Activated naive CD4-positive, alpha-beta T cell treated with anti-CD3 and anti-CD28 coated beads, Interleukin-2, amount 10 ng/mL, durations not matched to agents 7 days and 5 days (primary cell): ENCODE measurements at regions of chr9 and their contacts with region 1.

Region 1: GRCh38 chr9:109903515-109904138 is 123.6 kb downstream of the PALM2AKAP2 start:
- DNase-seq: peak; percentile 81
- H3K4me3 Mint-ChIP-seq: no peak overlapping the region
- H3K27ac Mint-ChIP-seq: no peak overlapping the region
- H3K4me1 Mint-ChIP-seq: peaks cover 19% of the 10 kb centered on the region
- H3K27me3 Mint-ChIP-seq: no peaks in the 10 kb centered on the region

Region 2: DNA sequence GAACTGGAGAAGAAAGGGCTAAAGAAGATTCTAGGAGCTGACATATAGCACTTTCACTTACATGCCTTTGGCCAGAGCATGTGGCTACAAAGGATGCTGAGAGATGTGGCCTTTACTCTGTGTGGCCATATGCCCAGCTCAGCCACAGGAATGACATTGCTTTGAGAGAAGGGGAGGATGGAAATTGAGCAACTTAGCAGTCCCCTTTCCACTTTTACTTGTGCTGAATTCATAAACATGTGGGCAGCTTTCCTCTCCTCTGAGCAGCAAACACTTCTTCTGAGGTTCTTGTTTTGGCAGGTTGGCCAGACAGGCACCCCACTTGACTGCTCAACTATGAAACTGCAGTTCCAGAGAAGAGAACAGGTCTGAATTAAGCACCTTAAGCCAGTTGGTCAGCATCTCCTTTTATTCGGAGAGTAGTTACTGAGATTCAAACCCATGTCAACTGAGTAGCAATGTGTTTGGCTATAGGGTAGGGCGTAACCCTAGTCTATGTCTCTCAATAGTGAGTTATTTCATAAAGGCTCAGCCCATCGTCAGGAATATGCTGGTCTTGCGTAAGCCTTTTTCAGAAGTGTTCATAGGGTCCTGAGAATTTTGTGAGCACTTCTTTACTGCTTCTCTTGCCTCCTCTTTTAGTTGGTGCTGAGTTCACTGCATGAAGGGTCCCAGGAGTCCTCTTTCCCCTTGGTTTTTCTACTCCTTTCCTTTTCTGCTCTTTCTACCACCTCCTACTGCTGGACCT is 10.8 kb after region 1 on chr9:
- CTCF ChIA-PET with region 1: interaction called, 18 read pairs
- DNase-seq: no peak
- H3K4me3 Mint-ChIP-seq: no peak overlapping the region
- H3K27ac Mint-ChIP-seq: no peak overlapping the region
- H3K4me1 Mint-ChIP-seq: peaks cover 29% of the 10 kb centered on the region
- H3K27me3 Mint-ChIP-seq: no peaks in the 10 kb centered on the region

Region 3: DNA sequence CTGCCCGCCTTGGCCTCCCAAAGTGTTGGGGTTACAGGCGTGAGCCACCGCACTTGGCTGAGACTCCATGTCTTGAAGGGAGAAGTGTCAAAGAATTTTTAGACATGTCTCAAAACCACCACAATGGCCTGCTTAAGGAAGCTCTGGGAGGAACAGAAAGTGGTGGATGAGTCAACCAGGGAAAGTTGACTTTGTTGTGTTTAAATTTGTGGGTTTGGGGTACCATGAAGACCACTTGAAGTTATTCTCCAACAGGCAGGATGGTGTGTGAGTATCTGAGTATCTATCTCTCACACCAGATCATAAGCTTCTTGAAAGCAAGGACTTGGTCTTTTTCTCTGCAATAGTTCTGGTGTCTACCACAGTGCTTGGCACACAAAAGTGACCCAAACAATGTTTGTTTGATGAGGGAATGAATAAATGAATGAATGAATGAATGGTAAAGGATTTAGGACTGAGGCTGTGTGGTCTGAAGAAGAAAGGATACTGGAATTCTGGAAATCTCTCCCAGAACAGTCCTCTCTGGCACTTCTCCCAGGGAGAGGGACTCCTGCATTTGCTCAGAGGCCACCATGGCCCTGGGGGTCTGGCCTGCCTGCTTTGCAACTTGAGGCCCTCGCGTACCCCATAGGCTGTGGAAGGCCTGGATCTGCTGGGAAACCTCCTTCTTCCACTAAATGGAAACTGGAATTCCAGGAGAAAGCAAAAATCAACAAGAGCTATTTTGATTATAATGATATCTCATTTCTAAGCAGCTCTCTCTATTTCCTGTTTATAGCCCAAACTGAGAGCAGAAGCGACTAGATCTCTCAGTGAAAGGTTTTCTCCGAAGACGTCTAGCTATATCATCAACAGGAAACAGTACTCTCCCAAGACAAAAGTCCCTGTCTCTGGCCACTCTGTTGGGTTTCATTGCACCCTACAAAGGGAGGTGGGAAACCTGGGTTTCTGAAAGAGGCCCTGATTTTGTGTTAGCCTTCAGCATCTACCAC is 64.3 kb after region 1 on chr9:
- CTCF ChIA-PET with region 1: interaction called, 13 read pairs
- DNase-seq: peak; percentile 43
- H3K4me3 Mint-ChIP-seq: no peak overlapping the region
- H3K27ac Mint-ChIP-seq: peak overlapping the region; percentile 95
- H3K4me1 Mint-ChIP-seq: peaks cover 76% of the 10 kb centered on the region
- H3K27me3 Mint-ChIP-seq: peaks cover 16% of the 10 kb centered on the region

Region 4: DNA sequence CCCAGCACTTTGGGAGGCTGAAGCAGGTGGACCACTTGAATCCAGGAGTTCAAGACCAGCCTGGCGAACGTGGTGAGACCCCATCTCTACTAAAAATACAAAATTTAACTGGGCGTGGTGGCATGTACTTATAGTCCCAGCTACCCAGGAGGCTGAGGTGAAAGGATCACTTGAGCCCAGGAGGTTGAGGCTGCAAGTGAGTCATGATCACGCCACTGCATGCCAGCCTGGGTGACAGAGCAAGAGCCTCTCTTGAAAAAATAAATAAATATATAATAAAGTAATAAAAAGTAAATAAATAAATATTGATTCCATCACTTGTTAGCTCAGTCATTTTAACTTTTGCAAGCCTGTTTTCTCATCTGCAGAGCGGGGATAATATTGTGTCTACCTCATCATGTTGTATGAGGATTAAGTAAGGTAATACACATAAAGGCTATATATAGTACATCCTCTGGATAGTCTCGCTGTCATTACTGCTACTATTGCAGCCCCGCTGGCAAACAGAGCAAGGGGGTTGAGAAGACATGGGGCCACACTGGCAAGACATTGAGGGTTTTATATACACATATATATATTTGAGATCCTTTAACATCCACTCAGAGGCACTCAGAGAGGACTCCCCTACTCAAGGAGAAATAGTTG is 93.4 kb after region 1 on chr9:
- CTCF ChIA-PET with region 1: no interaction called
- DNase-seq: no peak
- H3K4me3 Mint-ChIP-seq: no peak overlapping the region
- H3K27ac Mint-ChIP-seq: no peak overlapping the region
- H3K4me1 Mint-ChIP-seq: no peaks in the 10 kb centered on the region
- H3K27me3 Mint-ChIP-seq: peaks cover 25% of the 10 kb centered on the region

Region 5: GRCh38 chr9:110048403-110048975 is 144.9 kb after region 1 on chr9:
- CTCF ChIA-PET with region 1: interaction called, 211 read pairs
- DNase-seq: peak; percentile 91
- H3K4me3 Mint-ChIP-seq: peak overlapping the region; percentile 77
- H3K27ac Mint-ChIP-seq: peak overlapping the region; percentile 86
- H3K4me1 Mint-ChIP-seq: peaks cover 48% of the 10 kb centered on the region
- H3K27me3 Mint-ChIP-seq: peaks cover 28% of the 10 kb centered on the region

Region 6: DNA sequence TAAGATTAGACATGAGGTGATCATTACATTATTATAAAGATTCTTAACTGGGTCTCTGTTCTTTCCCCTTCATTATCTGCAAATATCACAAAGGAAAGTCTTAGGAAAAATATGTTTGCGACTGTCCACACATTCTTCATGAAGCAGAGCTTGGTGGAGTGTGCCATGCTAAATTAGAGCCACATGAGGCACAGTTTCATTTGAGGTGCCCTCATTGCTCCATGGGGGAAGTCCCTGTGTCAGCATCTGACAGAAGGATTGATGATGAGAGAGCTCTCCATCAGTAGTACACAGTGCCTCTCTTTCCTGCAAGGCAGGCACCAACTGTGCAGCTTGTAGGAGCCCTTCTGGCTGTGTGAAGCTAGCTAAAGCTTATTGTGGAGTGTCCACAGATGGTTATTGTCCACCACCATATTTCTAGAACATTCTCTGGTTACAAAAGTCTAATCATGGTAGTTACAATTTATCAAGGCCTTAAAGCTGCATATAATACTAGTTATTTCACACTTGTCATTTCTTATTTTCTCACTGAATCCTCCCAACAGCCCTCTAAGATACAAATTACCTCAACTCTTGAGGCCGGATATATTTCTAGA is 240.4 kb after region 1 on chr9:
- CTCF ChIA-PET with region 1: interaction called, 138 read pairs
- DNase-seq: peak; percentile 65
- H3K4me3 Mint-ChIP-seq: peak overlapping the region; percentile 49
- H3K27ac Mint-ChIP-seq: peak overlapping the region; percentile 97
- H3K4me1 Mint-ChIP-seq: peaks cover 73% of the 10 kb centered on the region
- H3K27me3 Mint-ChIP-seq: no peaks in the 10 kb centered on the region

Region 7: DNA sequence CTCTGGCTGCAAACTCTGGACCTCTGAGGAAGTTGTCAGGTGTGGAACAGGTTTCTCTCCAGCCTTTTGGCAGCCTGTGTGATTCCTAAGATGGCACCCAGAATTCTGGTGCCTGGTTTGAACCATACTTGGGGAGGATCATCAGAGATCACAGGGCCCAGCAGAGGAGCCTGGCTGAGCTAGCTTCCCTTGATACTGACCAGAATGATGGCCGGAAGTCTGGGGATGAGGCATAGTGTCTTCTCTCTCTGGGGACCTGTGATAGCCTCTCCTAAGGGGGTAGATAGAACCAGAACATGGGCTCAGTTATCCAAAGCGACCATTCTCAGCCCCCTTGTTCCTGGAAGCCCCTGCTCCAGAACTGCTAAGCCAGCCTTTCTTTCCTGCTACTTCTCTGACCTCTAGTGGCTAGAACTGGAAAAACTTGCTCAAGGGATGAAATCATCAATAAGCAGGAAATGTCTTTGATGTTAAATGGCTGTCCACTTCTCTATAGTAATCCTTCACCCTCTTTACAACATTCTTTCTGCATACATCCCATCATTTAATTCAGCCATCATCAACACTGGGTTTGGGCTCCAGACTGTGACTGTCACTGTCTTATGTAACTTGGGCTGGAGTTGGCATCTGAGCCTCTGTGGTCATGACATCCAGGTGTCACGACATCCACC is 249.2 kb after region 1 on chr9:
- CTCF ChIA-PET with region 1: interaction called, 138 read pairs
- DNase-seq: peak; percentile 40
- H3K4me3 Mint-ChIP-seq: no peak overlapping the region
- H3K27ac Mint-ChIP-seq: peak overlapping the region; percentile 80
- H3K4me1 Mint-ChIP-seq: peaks cover 98% of the 10 kb centered on the region
- H3K27me3 Mint-ChIP-seq: no peaks in the 10 kb centered on the region